ENCODE measurements at regions of chr6 and their contacts with region 1.

Region 1: GRCh38 chr6:109690737-109691621 is at the starts of genes AK9 and FIG4:
- DNase-seq: peak; percentile 97
- H3K4me3 Mint-ChIP-seq: peak within 1 kb of the TSS; percentile 86
- H3K27ac Mint-ChIP-seq: peak within 1 kb of the TSS; percentile 87
- H3K4me1 Mint-ChIP-seq: peaks cover 27% of the 10 kb centered on the region
- H3K27me3 Mint-ChIP-seq: peaks cover 8% of the 10 kb centered on the region
- total RNA-seq, gene AK9: 2.1 and 3.2 TPM in 2 replicates
- total RNA-seq, gene FIG4: 8.1 and 8.5 TPM in 2 replicates

Region 2: DNA sequence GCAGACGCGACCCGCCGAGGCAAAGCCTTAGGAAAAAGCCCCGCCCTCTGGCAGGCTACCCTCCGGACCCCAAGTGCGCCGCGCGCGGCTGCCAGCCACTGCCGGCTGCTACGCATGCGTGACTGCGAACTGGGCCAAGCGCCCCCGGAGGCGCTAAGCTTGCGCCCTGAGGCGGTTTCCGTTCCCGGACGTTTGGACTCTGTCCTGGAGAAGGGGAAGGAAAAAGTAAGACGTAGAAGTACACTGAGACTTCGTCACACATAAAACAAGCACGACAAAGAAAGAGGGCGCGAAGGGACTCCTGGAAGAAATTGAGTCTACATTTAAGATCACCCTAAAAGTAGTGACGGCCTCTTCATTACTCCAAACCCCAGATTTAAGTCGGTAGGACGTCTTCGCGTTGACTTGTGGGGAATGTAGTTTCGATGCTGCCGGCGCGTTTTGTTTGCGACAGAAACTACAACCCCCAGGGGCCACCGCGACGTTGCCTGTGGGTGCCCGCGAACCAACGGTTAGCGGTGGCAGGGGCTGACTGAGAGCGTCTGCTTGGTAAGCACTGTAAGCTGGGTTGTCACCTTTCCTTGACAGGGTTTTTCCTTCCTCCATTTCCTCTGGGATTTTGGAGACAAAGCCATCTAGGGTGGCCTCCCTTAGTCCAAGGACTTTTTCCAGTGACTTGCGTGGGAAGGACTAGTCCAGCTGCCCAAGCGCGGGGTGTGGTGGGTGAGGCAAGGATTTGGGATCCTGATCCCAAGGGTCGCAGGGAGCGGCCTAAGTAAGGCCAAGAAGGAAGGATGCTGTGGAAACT is 595.7 kb before region 1 on chr6 and contains the start of gene CEP57L1:
- intact Hi-C with region 1: loop called (anchors 2 kb)
- DNase-seq: peak; percentile 98
- H3K4me3 Mint-ChIP-seq: peak within 1 kb of the TSS; percentile 90
- H3K27ac Mint-ChIP-seq: peak within 1 kb of the TSS; percentile 100
- H3K4me1 Mint-ChIP-seq: peaks cover 53% of the 10 kb centered on the region
- H3K27me3 Mint-ChIP-seq: no peaks in the 10 kb centered on the region
- total RNA-seq, gene CEP57L1: 14.2 and 15.3 TPM in 2 replicates

Region 3: GRCh38 chr6:109455502-109456282 is 235.3 kb before region 1 on chr6 and contains the start of gene MICAL1:
- intact Hi-C with region 1: loop called (anchors 10 kb)
- DNase-seq: peak; percentile 93
- H3K4me3 Mint-ChIP-seq: peak within 1 kb of the TSS; percentile 98
- H3K27ac Mint-ChIP-seq: peak within 1 kb of the TSS; percentile 95
- H3K4me1 Mint-ChIP-seq: peaks cover 61% of the 10 kb centered on the region
- H3K27me3 Mint-ChIP-seq: no peaks in the 10 kb centered on the region
- total RNA-seq, gene MICAL1: 41.4 and 42.5 TPM in 2 replicates

Region 4: GRCh38 chr6:109526905-109527628 is 163.9 kb before region 1 on chr6:
- intact Hi-C with region 1: loop called (anchors 1 kb)
- DNase-seq: peak; percentile 89
- H3K4me3 Mint-ChIP-seq: no peak overlapping the region
- H3K27ac Mint-ChIP-seq: no peak overlapping the region
- H3K4me1 Mint-ChIP-seq: peaks cover 4% of the 10 kb centered on the region
- H3K27me3 Mint-ChIP-seq: peaks cover 8% of the 10 kb centered on the region

Region 5: DNA sequence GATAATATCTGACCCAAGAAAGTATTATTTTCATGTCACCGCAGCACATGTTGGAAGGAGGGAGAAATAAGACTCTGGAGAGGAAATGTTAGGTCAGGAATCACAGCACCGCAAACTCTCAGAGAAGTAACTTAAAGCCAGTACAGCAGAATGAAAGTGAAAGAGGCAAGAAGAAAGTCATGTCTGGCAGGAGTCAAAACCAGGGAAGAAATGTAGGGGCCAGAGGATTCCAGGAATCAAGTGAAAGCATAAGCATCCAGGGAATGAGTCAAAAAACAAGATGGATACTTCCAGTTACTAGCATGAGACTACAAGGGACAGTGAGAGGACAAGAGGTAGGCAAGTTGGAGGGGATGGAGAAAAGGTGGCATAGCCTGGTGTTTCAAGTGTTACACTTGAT is 80.4 kb before region 1 on chr6:
- intact Hi-C with region 1: loop called (anchors 5 kb)
- DNase-seq: no peak
- H3K4me3 Mint-ChIP-seq: no peak overlapping the region
- H3K27ac Mint-ChIP-seq: peak overlapping the region; percentile 15
- H3K4me1 Mint-ChIP-seq: peaks cover 8% of the 10 kb centered on the region
- H3K27me3 Mint-ChIP-seq: no peaks in the 10 kb centered on the region

Region 6: DNA sequence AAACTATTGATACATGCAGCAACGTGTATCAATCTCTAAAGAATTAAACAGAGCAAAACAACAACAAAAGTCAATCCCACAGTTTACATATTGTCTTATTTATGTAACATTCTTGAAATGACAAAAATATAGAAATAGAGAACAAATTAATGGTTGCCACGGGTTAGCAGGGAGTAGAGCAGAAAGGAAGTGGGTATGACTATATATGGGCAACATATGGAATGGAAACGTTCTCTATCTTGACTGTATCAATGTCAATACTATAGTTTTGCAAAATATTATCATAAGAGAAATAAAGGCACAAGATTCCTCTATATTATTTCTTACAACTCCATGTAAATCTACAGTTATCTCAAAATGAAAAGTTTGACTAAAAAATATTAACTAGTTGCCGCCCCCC is 12.7 kb before region 1 on chr6:
- intact Hi-C with region 1: loop called (anchors 1 kb)
- DNase-seq: no peak
- H3K4me3 Mint-ChIP-seq: no peak overlapping the region
- H3K27ac Mint-ChIP-seq: no peak overlapping the region
- H3K4me1 Mint-ChIP-seq: peaks cover 11% of the 10 kb centered on the region
- H3K27me3 Mint-ChIP-seq: no peaks in the 10 kb centered on the region